MCF 10A (cell line): ENCODE measurements at regions of chr10 and their contacts with region 1.

Region 1: DNA sequence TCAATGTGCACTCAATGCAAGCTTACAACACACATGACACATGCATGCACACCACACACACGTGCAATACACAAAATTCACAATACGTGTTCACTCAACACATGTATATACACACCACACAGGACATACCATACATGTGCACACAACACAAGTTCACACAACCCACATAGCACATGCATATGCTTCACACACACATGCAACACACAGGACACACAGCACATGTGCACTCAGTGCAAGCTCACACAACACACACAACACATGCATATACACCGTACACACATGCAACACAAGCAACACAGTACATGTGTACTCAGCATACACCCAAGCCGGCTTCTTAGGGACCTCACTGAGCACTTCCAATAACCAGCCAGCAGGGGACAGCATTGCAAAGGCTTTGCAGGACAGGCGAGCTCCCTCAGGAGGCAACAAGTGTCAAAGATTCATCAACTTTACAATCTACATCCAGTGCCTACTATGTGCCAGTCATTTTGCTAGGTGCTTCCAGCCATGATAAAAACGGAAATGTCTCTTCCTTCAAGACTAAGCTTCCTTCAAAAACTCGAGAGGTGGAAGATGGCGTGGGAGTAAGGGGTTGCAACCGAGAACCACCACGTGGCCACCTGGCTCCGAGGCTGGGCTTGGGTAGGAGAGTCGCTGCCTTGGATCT is 61.1 kb downstream of the JCAD start:
- DNase-seq: peak; percentile 90
- H3K4me3 Mint-ChIP-seq: no peak overlapping the region
- H3K27ac Mint-ChIP-seq: no peak overlapping the region
- H3K4me1 Mint-ChIP-seq: peaks cover 41% of the 10 kb centered on the region
- H3K27me3 Mint-ChIP-seq: no peaks in the 10 kb centered on the region
- CTCF ChIP-seq: peak; percentile 96

Region 2: GRCh38 chr10:29857843-29858701 is 140.2 kb before region 1 on chr10:
- CTCF ChIA-PET with region 1: interaction called, 5 read pairs
- POLR2A ChIA-PET with region 1: interaction called, 3 read pairs
- intact Hi-C with region 1: loop called (anchors 2 kb)
- DNase-seq: peak; percentile 83
- H3K4me3 Mint-ChIP-seq: no peak overlapping the region
- H3K27ac Mint-ChIP-seq: peak overlapping the region; percentile 3
- H3K4me1 Mint-ChIP-seq: peaks cover 38% of the 10 kb centered on the region
- H3K27me3 Mint-ChIP-seq: no peaks in the 10 kb centered on the region
- CTCF ChIP-seq: peak; percentile 68

Region 3: GRCh38 chr10:29946953-29947700 is 51.1 kb before region 1 on chr10:
- CTCF ChIA-PET with region 1: interaction called, 21 read pairs
- POLR2A ChIA-PET with region 1: interaction called, 31 read pairs
- intact Hi-C with region 1: loop called (anchors 1 kb)
- DNase-seq: peak; percentile 95
- H3K4me3 Mint-ChIP-seq: peak overlapping the region; percentile 61
- H3K27ac Mint-ChIP-seq: peak overlapping the region; percentile 99
- H3K4me1 Mint-ChIP-seq: peaks cover 80% of the 10 kb centered on the region
- H3K27me3 Mint-ChIP-seq: no peaks in the 10 kb centered on the region
- CTCF ChIP-seq: no peak

Region 4: DNA sequence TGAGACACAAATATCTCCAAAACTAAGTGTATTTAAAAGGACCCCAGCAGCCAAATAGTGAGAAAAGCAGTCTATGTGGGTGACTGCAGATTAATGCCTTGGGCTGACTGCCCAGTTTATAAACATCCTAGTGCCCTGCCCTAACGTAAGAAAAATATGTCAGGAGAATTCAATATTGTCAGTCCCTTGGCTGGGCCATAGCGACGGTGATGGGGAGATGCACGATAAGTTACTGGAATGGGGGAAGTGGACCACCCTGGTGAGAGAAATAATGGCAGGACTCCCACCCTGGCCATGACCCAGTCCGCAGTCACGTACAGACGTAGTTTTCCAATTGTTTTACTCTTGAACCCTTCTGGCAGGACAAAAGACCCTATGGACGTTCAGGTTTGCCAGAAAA is 13.1 kb after region 1 on chr10:
- CTCF ChIA-PET with region 1: interaction called, 10 read pairs
- POLR2A ChIA-PET with region 1: no interaction called
- intact Hi-C with region 1: no loop called
- DNase-seq: no peak
- H3K4me3 Mint-ChIP-seq: no peak overlapping the region
- H3K27ac Mint-ChIP-seq: no peak overlapping the region
- H3K4me1 Mint-ChIP-seq: peaks cover 6% of the 10 kb centered on the region
- H3K27me3 Mint-ChIP-seq: no peaks in the 10 kb centered on the region
- CTCF ChIP-seq: no peak

Region 5: DNA sequence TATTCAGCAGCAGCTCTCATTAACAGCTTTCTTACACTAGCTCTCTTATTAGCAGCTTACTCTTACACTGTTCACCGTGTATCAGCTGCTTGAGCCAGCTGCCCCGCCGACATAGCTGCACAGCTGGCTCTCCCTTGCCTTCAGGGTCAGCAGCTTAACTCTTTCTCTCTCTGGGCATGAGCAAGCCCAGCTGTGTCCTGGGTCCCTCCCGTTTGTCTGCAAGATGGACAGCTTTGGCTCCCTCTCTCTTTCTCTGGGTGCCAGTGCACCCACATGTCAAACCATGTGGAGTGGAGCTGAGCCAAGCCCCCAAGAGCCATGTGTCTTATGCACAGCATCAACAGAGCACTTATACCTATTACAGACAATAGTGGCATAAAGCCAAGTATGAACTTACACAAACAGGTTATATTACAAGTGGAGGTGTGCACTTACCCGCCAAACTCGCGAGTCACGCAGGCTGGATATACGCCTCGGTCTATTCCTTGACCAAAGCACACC is 386.5 kb after region 1 on chr10:
- CTCF ChIA-PET with region 1: interaction called, 4 read pairs
- POLR2A ChIA-PET with region 1: no interaction called
- intact Hi-C with region 1: loop called (anchors 1 kb)
- DNase-seq: peak; percentile 76
- H3K4me3 Mint-ChIP-seq: no peak overlapping the region
- H3K27ac Mint-ChIP-seq: no peak overlapping the region
- H3K4me1 Mint-ChIP-seq: peaks cover 26% of the 10 kb centered on the region
- H3K27me3 Mint-ChIP-seq: peaks cover 15% of the 10 kb centered on the region
- CTCF ChIP-seq: peak; percentile 46